ENCODE measurements at regions of chr4 and their contacts with region 1.

Region 1: GRCh38 chr4:53640576-53641453 is 49.5 kb upstream of the LNX1 start:
- DNase-seq: peak; percentile 76
- ATAC-seq: peak; percentile 89
- H3K4me3 ChIP-seq: no peak overlapping the region
- H3K27ac ChIP-seq: peak overlapping the region; percentile 68
- H3K4me1 ChIP-seq: peaks cover 19% of the 10 kb centered on the region; the same call in 1 of the 2 replicates
- H3K27me3 ChIP-seq: no peaks in the 10 kb centered on the region
- CTCF ChIP-seq: no peak
- EP300 ChIP-seq: peak in 1 of 2 experiments; percentile 27; a peak in 1 of 4 replicates
- POLR2A ChIP-seq: no peak
- RAD21 ChIP-seq: no peak

Region 2: DNA sequence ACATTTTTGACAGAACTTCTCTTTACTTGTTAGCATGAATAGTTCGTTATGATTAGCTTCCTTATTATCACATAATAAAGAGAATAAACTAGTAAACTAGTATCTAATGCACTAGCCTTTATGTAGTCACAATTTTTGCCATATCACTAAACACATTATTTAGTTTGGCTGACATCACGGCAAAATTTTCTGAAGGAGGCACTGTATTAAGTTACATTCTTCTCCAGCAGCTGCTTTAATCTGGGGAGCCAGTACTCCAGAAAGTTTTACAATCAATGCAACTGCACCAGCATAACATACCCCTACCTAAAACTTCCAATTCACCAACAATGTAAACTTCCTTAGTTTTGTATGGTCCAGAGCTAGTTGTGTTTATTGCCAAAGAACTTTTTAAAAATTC is 175.5 kb before region 1 on chr4:
- CTCF ChIA-PET with region 1: no interaction called
- POLR2A ChIA-PET with region 1: no interaction called
- RAD21 ChIA-PET with region 1: no interaction called
- SMC1A ChIA-PET with region 1: no interaction called
- in situ Hi-C with region 1: no loop called
- intact Hi-C with region 1: no loop called
- DNase-seq: no peak
- ATAC-seq: no peak
- H3K4me3 ChIP-seq: no peak overlapping the region
- H3K27ac ChIP-seq: no peak overlapping the region
- H3K4me1 ChIP-seq: no peaks in the 10 kb centered on the region
- H3K27me3 ChIP-seq: no peaks in the 10 kb centered on the region
- CTCF ChIP-seq: no peak
- EP300 ChIP-seq: no peak
- POLR2A ChIP-seq: no peak
- RAD21 ChIP-seq: no peak

Region 3: GRCh38 chr4:53507671-53508286 is 133.0 kb before region 1 on chr4:
- CTCF ChIA-PET with region 1: interaction called, 5 read pairs
- POLR2A ChIA-PET with region 1: interaction called, 3 read pairs
- RAD21 ChIA-PET with region 1: interaction called, 5 read pairs
- SMC1A ChIA-PET with region 1: interaction called, 11 read pairs
- in situ Hi-C with region 1: no loop called
- intact Hi-C with region 1: no loop called
- DNase-seq: no peak
- ATAC-seq: peak; percentile 80
- H3K4me3 ChIP-seq: no peak overlapping the region
- H3K27ac ChIP-seq: no peak overlapping the region
- H3K4me1 ChIP-seq: no peaks in the 10 kb centered on the region
- H3K27me3 ChIP-seq: no peaks in the 10 kb centered on the region
- CTCF ChIP-seq: no peak
- EP300 ChIP-seq: no peak
- POLR2A ChIP-seq: no peak
- RAD21 ChIP-seq: no peak

Region 4: DNA sequence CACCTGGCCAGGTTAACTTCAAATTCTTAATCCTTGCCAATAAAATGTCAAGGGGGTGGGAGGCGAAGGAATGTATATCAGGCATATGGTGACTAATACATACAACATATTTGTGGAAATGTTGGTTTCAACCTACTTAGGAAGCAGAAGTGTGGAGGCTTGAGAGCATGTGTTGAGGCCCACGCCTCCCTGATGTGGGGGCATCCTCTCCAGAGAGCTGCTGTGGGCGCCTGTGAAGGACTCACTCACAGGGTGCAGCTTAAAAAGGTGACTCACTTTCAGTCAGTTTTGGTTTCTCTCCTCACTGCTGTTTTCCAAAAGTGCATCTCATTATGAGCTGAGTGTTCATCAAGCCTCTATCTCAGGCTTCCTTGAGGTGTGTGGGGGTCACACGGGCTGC is 77.0 kb before region 1 on chr4:
- CTCF ChIA-PET with region 1: interaction called, 3 read pairs
- POLR2A ChIA-PET with region 1: no interaction called
- RAD21 ChIA-PET with region 1: interaction called, 17 read pairs
- SMC1A ChIA-PET with region 1: interaction called, 7 read pairs
- in situ Hi-C with region 1: no loop called
- intact Hi-C with region 1: no loop called
- DNase-seq: peak; percentile 24
- ATAC-seq: peak; percentile 99
- H3K4me3 ChIP-seq: no peak overlapping the region
- H3K27ac ChIP-seq: no peak overlapping the region
- H3K4me1 ChIP-seq: no peaks in the 10 kb centered on the region; the same call in 1 of the 2 replicates
- H3K27me3 ChIP-seq: no peaks in the 10 kb centered on the region
- CTCF ChIP-seq: no peak
- EP300 ChIP-seq: no peak
- POLR2A ChIP-seq: no peak
- RAD21 ChIP-seq: no peak

Region 5: GRCh38 chr4:53617101-53617680 is 23.6 kb before region 1 on chr4:
- CTCF ChIA-PET with region 1: interaction called, 3 read pairs
- POLR2A ChIA-PET with region 1: interaction called, 6 read pairs
- RAD21 ChIA-PET with region 1: interaction called, 9 read pairs
- SMC1A ChIA-PET with region 1: interaction called, 18 read pairs
- in situ Hi-C with region 1: no loop called
- intact Hi-C with region 1: no loop called
- DNase-seq: no peak
- ATAC-seq: peak; percentile 75
- H3K4me3 ChIP-seq: no peak overlapping the region
- H3K27ac ChIP-seq: no peak overlapping the region; the same call in 1 of the 2 replicates
- H3K4me1 ChIP-seq: no peaks in the 10 kb centered on the region
- H3K27me3 ChIP-seq: no peaks in the 10 kb centered on the region
- CTCF ChIP-seq: no peak
- EP300 ChIP-seq: no peak
- POLR2A ChIP-seq: no peak
- RAD21 ChIP-seq: no peak

Region 6: DNA sequence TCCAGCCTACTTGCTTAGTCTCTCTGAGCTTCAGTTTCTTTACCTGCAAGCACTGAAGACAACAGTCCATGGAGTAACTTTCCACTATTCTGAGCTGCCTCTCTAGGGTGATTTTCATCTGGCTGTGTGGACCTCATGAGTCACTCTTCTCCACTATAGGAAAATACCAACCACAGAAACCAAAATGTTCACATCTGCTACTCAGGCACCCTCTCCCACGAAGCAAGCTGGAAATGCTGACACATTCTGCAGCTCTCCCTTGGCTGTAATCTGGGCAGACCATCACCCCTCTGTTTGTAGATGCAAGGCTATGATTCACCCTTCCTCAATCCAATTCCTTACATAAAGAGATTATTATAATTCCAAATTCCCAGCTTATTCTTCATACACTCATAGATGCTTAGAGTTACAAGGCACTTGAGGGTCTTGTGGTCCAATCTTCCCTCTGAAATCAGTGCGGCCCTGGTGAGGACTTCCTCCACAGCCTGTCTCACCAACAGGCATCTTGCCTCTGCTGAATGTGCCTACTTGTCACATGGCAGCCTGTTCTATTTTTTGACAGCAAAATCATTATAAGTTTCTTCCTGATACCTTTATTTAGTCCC is 47.5 kb after region 1 on chr4:
- CTCF ChIA-PET with region 1: no interaction called
- POLR2A ChIA-PET with region 1: interaction called, 5 read pairs
- RAD21 ChIA-PET with region 1: interaction called, 17 read pairs
- SMC1A ChIA-PET with region 1: interaction called, 15 read pairs
- in situ Hi-C with region 1: no loop called
- intact Hi-C with region 1: no loop called
- DNase-seq: peak; percentile 76
- ATAC-seq: peak; percentile 88
- H3K4me3 ChIP-seq: no peak overlapping the region
- H3K27ac ChIP-seq: peak overlapping the region; percentile 1; the same call in 1 of the 2 replicates
- H3K4me1 ChIP-seq: peaks cover 4% of the 10 kb centered on the region; the same call in 1 of the 2 replicates
- H3K27me3 ChIP-seq: no peaks in the 10 kb centered on the region
- CTCF ChIP-seq: no peak
- EP300 ChIP-seq: peak in 1 of 2 experiments; percentile 49; a peak in 1 of 4 replicates
- POLR2A ChIP-seq: no peak
- RAD21 ChIP-seq: no peak

Region 7: DNA sequence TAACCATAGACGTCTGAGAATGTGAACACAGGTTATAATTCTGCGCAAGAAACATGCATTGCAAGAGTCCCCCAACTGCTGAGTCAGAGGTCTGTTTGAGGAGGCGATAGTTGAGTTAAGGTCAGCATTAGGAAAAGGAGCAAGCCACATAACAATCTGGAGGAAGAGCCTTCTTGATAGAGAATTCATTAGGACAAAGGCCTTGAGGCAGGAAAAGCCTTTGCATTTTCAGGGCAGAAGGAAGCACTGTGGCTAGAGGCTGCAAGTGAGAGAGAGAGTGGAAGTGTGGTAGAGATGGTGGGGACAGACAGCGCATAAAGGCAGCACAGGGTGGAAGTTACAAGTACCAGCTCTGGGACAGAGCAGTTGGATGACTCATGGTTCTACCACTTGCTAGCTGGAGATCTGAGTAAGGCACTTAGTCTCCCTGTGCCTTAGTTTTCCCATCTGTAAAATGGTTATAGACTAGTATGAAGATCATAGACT is 76.3 kb after region 1 on chr4:
- CTCF ChIA-PET with region 1: no interaction called
- POLR2A ChIA-PET with region 1: no interaction called
- RAD21 ChIA-PET with region 1: no interaction called
- SMC1A ChIA-PET with region 1: no interaction called
- in situ Hi-C with region 1: no loop called
- intact Hi-C with region 1: no loop called
- DNase-seq: no peak
- ATAC-seq: no peak
- H3K4me3 ChIP-seq: no peak overlapping the region
- H3K27ac ChIP-seq: no peak overlapping the region
- H3K4me1 ChIP-seq: no peaks in the 10 kb centered on the region
- H3K27me3 ChIP-seq: no peaks in the 10 kb centered on the region
- CTCF ChIP-seq: no peak
- EP300 ChIP-seq: no peak
- POLR2A ChIP-seq: no peak
- RAD21 ChIP-seq: no peak

Region 8: DNA sequence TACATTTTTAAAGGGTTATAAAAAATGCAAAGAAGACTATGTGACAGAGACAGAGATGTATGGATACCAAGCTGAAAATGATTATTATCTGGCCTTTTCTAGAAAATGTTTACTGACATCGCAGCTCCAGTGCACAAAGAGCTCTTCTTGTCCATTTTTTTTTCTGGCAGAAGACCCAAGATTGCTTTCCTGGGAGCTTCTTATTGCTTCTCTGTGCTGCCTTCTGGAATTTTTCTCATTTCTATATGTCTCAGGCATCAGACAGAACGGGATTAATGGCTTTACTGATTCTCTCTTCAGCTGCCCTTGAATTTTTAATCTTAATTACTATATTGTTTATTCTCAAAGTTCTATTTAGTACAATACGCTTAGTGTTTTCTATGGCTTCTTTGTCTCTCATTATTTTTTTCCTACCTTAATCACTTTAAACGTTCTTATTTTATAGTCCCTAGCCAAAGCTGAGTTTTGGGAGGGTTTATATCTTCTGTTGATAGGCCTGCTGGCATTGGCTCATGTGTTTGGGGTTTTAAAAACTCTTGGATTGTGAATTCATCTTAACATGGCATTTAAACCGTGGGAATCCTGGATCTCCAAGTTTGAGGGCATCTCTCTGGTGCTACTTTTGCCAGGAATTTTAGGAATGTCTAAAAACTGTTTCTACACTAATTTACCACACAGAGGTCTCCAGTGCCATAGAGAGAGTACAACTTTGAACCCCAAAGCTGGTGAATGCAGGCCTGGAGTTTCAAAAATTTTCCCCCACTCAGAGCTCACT is 89.4 kb after region 1 on chr4:
- CTCF ChIA-PET with region 1: no interaction called
- POLR2A ChIA-PET with region 1: no interaction called
- RAD21 ChIA-PET with region 1: no interaction called
- SMC1A ChIA-PET with region 1: no interaction called
- in situ Hi-C with region 1: no loop called
- intact Hi-C with region 1: no loop called
- DNase-seq: no peak
- ATAC-seq: no peak
- H3K4me3 ChIP-seq: no peak overlapping the region
- H3K27ac ChIP-seq: no peak overlapping the region
- H3K4me1 ChIP-seq: no peaks in the 10 kb centered on the region
- H3K27me3 ChIP-seq: no peaks in the 10 kb centered on the region
- CTCF ChIP-seq: no peak
- EP300 ChIP-seq: no peak
- POLR2A ChIP-seq: no peak
- RAD21 ChIP-seq: no peak

Region 9: DNA sequence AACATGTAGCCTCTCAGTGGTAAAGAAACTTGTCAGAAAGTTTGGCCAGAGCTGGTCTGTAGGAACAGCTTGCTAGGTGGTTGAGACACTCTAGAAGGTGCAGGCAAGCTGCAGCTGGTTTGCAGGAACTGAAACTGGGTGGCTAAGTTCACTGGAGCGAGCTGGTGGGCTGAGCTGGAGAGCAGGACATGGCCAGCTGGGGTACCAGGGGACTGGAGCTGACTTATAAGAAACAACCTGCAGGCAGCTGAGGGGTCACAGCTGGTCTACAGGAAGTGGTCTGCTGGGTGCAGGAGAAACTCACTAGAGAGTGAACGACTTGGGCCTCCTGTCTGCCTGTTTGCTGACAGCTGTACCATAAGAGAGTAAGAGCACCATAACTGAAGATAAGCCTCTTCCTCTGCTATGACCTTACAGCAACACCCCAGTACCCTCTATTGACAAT is 107.5 kb after region 1 on chr4:
- CTCF ChIA-PET with region 1: no interaction called
- POLR2A ChIA-PET with region 1: interaction called, 4 read pairs
- RAD21 ChIA-PET with region 1: interaction called, 11 read pairs
- SMC1A ChIA-PET with region 1: interaction called, 12 read pairs
- in situ Hi-C with region 1: no loop called
- intact Hi-C with region 1: no loop called
- DNase-seq: peak; percentile 96
- ATAC-seq: peak; percentile 99
- H3K4me3 ChIP-seq: no peak overlapping the region
- H3K27ac ChIP-seq: peak overlapping the region; percentile 71
- H3K4me1 ChIP-seq: peaks cover 29% of the 10 kb centered on the region
- H3K27me3 ChIP-seq: no peaks in the 10 kb centered on the region
- CTCF ChIP-seq: no peak
- EP300 ChIP-seq: peak; percentile 77 to 79; a peak in 3 of 4 replicates
- POLR2A ChIP-seq: no peak
- RAD21 ChIP-seq: peak; percentile 4; the same call in 1 of the 2 replicates

Measured in GM12878 (cell line).